Left ventricle myocardium superior (tissue), 1 donor: ENCODE measurements at regions of chr17 and their contacts with region 1.

Region 1: DNA sequence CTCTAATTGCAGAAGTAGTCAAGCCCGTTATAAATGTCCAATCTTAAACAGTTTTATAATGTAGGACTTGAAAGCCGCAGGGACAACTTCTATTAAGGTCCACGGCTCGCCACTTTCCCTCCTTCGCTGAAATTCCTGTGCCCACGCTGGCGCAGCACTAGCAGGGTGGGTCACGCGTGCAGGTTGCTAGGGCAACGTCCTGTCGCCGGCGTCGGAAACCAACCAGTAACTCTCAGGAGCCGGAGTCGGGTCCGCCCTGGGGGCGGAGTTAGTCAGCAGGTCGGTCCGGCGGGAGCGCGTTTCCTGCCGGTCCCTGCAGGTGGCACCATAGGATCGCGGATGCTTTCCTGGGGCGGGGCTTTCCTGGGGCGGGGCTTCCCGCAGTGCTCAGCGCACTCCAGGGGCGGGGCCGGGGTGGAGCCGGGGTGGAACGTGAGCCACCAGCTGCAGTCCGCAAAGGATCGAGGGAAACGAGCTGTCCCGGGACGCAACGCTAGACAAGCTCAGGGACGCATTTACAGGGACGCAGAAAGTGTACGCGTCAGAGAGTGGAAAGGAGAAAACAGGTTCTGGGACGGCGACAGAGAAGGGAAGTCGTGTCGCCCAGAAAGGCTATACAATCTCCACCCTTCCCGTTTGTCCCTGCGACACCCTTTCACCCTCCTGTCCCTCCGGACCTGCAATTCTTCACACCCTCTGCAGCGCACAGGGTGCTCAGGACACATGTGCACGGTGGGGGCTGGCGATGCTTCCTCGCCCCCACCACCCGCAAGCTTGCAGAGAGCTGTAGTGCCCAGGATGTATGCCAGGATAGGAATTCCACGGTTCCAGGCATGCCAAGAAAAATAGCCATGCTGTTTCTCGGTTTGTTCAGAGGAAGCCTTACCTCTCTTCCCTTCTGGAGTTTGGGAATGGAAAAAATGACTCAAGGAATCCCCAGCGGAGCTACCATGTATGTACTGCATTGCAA is 12.4 kb downstream of the COPZ2 start:
- DNase-seq: peak; percentile 99
- ATAC-seq: peak; percentile 87

Region 2: GRCh38 chr17:47987240-47987835 is 37.9 kb before region 1 on chr17:
- intact Hi-C with region 1: no loop called
- DNase-seq: peak; percentile 44
- ATAC-seq: peak; percentile 54

Region 3: DNA sequence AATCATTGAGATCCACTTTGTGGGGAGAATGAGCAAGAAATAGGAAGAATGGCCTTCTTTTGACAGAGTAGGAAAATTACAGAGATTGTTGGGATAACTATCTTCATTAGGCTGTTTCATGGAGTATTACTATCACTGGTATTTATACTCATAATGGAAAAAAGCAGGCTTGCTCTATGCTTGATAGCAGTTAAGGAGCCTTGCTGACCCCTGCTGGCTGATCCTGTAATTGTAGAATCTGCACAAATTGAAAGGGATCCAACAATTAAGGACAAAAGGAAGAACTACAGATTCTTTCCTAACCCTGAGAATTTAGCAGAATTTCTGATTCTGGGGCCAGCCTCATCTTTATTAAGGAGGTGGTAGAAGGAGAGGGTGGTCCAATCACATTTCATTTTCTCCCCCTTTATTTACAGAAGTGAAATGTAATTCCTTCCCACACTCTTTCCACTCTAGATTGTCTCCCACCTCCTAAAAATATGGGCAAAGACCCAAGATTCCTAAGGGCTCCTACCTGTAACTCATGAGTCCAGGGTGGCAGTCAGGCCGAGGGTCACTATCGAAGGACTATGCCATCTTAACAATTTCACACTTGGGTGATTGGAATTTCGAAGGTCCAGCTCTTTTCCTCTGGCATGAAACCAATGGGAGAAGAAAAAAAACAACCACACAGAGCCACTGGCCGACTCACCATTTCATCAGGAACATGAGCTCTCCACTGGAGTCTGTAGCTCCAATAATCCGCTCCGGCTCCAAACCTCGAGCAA is 49.3 kb after region 1 on chr17:
- intact Hi-C with region 1: loop called (anchors 2 kb)
- DNase-seq: peak; percentile 70
- ATAC-seq: peak; percentile 79

Region 4: GRCh38 chr17:48131216-48131824 is 106.1 kb after region 1 on chr17:
- intact Hi-C with region 1: loop called (anchors 1 kb)
- DNase-seq: no peak
- ATAC-seq: peak; percentile 93